Activated CD4-positive, alpha-beta T cell treated with anti-CD3 and anti-CD28 coated beads for 36 hours (primary cell): ENCODE measurements at regions of chr6 and their contacts with region 1.

Region 1: DNA sequence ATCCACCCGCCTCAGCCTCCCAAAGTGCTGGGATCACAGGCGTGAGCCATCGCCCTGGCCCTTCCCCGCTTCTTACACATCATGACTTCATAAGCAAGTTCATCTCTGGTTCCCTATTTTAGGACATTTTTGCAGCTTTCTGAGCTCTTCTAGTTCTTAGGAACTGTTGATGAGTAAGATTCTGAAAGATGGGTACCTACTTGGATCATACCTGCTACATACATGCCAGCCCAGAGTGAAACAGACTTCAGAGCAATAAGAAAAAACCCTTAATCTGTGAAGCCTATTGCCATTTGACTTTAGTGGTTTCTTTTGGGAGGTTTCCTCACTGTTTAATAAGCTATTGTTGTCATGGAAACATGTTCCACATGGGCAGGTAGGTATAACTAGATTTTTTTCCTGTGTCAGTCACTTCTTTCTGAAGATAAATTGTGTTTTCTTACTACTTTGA is 27.9 kb upstream of the TMEM217 start:
- DNase-seq: peak; percentile 40
- ATAC-seq: peak; percentile 64
- H3K4me3 Mint-ChIP-seq: no peak overlapping the region
- H3K27ac Mint-ChIP-seq: peak overlapping the region; percentile 55
- H3K4me1 Mint-ChIP-seq: peaks cover 35% of the 10 kb centered on the region
- H3K27me3 Mint-ChIP-seq: no peaks in the 10 kb centered on the region

Region 2: GRCh38 chr6:37314487-37315156 is 28.7 kb after region 1 on chr6:
- CTCF ChIA-PET with region 1: interaction called, 3 read pairs
- POLR2A ChIA-PET with region 1: interaction called, 13 read pairs
- intact Hi-C with region 1: no loop called
- DNase-seq: peak; percentile 70
- ATAC-seq: peak; percentile 88
- H3K4me3 Mint-ChIP-seq: no peak overlapping the region
- H3K27ac Mint-ChIP-seq: no peak overlapping the region
- H3K4me1 Mint-ChIP-seq: peaks cover 4% of the 10 kb centered on the region
- H3K27me3 Mint-ChIP-seq: no peaks in the 10 kb centered on the region